Esophagus muscularis mucosa (tissue), 4 donors: ENCODE measurements at regions of chr14 and their contacts with region 1.

Region 1: GRCh38 chr14:88168498-88169165 is 154.4 kb downstream of the KCNK10 start:
- DNase-seq: no peak
- H3K4me3 ChIP-seq: no peak overlapping the region
- H3K27ac ChIP-seq: no peak overlapping the region
- H3K4me1 ChIP-seq: no peaks in the 10 kb centered on the region
- H3K27me3 ChIP-seq: peaks cover 0 to 5% (median 0%) of the 10 kb centered on the region in 4 donors
- CTCF ChIP-seq: peak; percentile 37 to 60 (median 38)
- EP300 ChIP-seq: no peak
- POLR2A ChIP-seq: no peak

Region 2: GRCh38 chr14:87944987-87945604 is 223.5 kb before region 1 on chr14:
- intact Hi-C with region 1: loop called (anchors 10 kb)
- DNase-seq: no peak
- H3K4me3 ChIP-seq: no peak overlapping the region
- H3K27ac ChIP-seq: no peak overlapping the region
- H3K4me1 ChIP-seq: no peaks in the 10 kb centered on the region
- H3K27me3 ChIP-seq: no peaks in the 10 kb centered on the region
- CTCF ChIP-seq: peak; percentile 57 to 68 (median 66)
- EP300 ChIP-seq: no peak
- POLR2A ChIP-seq: no peak